ENCODE measurements at regions of chr18 and their contacts with region 1.

Region 1: DNA sequence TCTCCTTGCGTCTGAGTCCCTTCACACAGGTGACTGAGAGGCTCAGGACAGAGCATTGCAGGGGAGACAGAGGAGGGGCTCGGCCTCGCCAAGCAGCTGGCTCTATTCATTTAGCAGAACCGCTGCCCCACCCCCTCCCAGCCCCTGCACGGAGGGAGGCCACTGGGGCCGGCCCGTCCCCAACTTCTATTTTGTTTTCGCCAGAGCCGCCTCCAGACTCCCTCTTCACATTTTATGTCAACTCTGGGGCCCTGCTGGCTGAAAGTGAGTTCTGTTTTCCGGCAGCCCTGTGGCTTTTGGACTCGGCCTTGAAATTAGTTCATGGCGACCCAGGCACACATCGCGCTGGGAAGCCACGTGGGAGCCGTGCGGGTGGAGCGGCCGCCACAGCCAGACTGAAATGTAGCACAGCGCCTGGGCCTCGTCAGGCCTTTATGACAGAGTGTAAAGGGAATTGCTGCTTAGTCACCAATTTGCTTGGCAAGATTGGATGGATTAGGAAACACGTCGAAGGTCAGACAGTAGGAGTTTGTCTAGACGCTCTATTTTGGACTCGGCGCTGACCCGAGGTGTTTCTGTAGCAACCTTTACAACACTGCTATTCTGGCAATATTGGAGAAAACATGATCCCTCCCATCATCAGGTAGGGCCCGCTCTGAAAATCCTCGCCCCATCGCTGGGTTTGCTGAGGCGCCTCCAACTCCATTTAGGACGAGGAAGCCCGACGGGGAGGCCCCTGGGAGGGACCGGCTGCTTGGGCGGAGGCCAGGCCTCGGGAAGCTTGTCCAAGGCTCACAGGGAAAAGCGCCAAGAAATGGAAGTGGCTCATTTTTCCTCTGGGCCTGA is 90.7 kb upstream of the CTDP1 start:
- DNase-seq: peak; percentile 74
- H3K4me3 ChIP-seq: no peak overlapping the region
- CTCF ChIP-seq: no peak

Region 2: GRCh38 chr18:79504034-79504433 is 84.8 kb before region 1 on chr18:
- in situ Hi-C with region 1: loop called (anchors 5 kb)
- DNase-seq: no peak
- H3K4me3 ChIP-seq: no peak overlapping the region
- CTCF ChIP-seq: no peak

Region 3: GRCh38 chr18:79538635-79539034 is 50.2 kb before region 1 on chr18:
- in situ Hi-C with region 1: loop called (anchors 5 kb)
- DNase-seq: no peak
- H3K4me3 ChIP-seq: no peak overlapping the region
- CTCF ChIP-seq: no peak

Region 4: DNA sequence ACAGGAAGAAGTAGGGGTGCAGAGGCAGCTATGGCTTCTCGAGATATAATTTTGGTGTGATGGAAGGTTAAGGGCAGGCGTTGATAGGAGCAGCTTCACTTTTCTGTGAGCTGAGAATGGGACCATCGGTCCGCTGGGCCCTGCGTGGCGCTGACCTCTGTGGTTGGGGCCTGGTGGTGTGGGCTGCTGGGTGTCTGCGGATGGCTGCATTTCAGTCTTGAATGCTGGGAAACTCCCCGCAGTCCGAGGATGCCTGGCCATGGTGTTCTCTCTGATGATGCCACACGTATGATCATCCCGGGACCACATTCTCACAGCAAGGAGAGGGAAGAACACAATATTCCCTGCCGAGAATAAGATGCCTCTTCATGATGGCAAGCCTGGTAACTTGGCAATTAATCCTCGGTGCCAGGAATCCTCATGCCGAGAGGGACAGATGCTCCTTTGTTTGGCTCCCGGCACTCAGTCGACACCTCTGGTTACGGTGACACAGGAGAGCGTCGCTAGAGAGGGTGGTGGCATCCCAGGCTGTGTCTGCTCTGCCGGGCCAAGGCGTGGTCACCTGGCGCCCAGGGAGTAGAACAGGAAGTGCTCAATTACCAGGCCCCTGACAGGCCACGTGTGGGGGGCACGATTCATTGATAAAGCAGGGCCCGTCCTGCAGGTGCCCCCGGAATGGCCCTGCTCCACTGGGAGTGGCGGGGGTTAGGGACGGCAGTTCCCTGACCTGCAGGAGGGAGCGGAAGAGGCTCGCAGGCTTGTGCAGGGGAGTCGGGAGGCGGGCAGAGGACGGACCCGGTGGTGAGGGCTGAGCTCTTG is 28.6 kb before region 1 on chr18:
- in situ Hi-C with region 1: no loop called
- DNase-seq: no peak
- H3K4me3 ChIP-seq: no peak overlapping the region
- CTCF ChIP-seq: no peak